ENCODE measurements at regions of chr21 and their contacts with region 1.

Region 1: GRCh38 chr21:37675202-37675801 is 241.0 kb downstream of the KCNJ6 start:
- DNase-seq: peak; percentile 46
- H3K4me3 Mint-ChIP-seq: no peak overlapping the region
- H3K27ac Mint-ChIP-seq: no peak overlapping the region
- H3K4me1 Mint-ChIP-seq: peaks cover 15% of the 10 kb centered on the region
- H3K27me3 Mint-ChIP-seq: peaks cover 11% of the 10 kb centered on the region
- CTCF ChIP-seq: peak; percentile 89

Region 2: DNA sequence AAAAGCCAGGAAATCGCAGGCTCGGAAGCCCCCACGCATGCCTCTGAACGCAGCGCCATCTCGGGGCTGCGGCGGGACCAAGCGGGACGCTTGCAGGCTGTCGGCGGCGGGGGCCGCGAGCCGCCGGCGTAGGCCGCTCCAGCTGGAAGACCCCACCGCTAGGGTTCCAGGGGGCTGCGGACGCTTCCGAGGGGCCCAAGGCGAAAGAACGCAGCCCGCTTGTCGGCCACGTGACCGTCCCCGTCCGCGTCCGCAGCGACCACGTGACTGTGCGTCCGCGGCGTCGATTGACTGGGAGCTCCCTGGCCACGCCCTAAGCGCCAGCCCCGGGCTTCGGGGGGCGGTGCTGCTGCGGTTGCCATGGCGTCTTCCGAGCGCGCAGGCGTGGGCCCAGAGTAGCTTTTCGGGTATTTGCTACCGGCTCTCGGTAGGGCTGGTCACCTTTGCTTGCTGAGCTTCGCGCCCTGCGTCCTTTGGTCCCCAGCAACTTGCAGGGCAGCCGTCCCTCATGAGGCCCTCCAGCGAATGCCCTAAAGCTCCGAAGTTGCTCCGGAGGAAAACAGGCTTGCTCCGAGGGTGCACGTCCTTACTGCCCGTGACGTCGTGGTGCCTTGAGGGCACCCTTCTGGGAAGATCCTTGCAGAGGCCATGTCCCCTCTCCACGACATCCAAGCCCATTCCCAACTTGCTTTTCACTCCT is 111.5 kb before region 1 on chr21:
- CTCF ChIA-PET with region 1: interaction called, 11 read pairs
- POLR2A ChIA-PET with region 1: no interaction called
- intact Hi-C with region 1: no loop called
- DNase-seq: peak; percentile 94
- H3K4me3 Mint-ChIP-seq: peak overlapping the region; percentile 92
- H3K27ac Mint-ChIP-seq: peak overlapping the region; percentile 96
- H3K4me1 Mint-ChIP-seq: peaks cover 15% of the 10 kb centered on the region
- H3K27me3 Mint-ChIP-seq: peaks cover 2% of the 10 kb centered on the region
- CTCF ChIP-seq: peak; percentile 42

Region 3: GRCh38 chr21:37658817-37659458 is 16.4 kb before region 1 on chr21:
- CTCF ChIA-PET with region 1: interaction called, 24 read pairs
- POLR2A ChIA-PET with region 1: interaction called, 4 read pairs
- intact Hi-C with region 1: no loop called
- DNase-seq: peak; percentile 83
- H3K4me3 Mint-ChIP-seq: peak overlapping the region; percentile 6
- H3K27ac Mint-ChIP-seq: peak overlapping the region; percentile 75
- H3K4me1 Mint-ChIP-seq: peaks cover 29% of the 10 kb centered on the region
- H3K27me3 Mint-ChIP-seq: no peaks in the 10 kb centered on the region
- CTCF ChIP-seq: peak; percentile 26

Region 4: GRCh38 chr21:37686991-37687810 is 11.9 kb after region 1 on chr21:
- CTCF ChIA-PET with region 1: interaction called, 10 read pairs
- POLR2A ChIA-PET with region 1: no interaction called
- intact Hi-C with region 1: no loop called
- DNase-seq: no peak
- H3K4me3 Mint-ChIP-seq: no peak overlapping the region
- H3K27ac Mint-ChIP-seq: no peak overlapping the region
- H3K4me1 Mint-ChIP-seq: no peaks in the 10 kb centered on the region
- H3K27me3 Mint-ChIP-seq: no peaks in the 10 kb centered on the region
- CTCF ChIP-seq: no peak

Region 5: DNA sequence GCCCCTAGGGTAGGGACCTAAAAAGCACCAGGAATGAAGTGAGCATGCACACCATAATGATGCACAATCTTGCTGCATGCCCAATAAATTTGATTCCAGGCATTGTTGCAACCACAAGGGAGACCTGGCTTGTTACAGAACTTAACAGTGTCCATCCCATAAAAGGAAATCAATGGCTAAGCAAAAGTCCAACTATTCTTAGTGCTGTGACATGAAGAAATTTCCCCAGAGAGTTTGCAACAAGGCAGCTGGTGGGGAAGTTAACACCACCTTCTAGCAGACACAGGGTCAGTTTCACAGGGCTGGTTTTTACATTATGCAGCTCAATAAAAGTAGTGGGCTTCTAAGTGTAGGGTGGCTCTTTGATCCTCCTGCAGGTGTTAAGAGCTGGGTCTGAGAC is 19.8 kb after region 1 on chr21:
- CTCF ChIA-PET with region 1: interaction called, 10 read pairs
- POLR2A ChIA-PET with region 1: no interaction called
- intact Hi-C with region 1: no loop called
- DNase-seq: no peak
- H3K4me3 Mint-ChIP-seq: no peak overlapping the region
- H3K27ac Mint-ChIP-seq: no peak overlapping the region
- H3K4me1 Mint-ChIP-seq: no peaks in the 10 kb centered on the region
- H3K27me3 Mint-ChIP-seq: peaks cover 25% of the 10 kb centered on the region
- CTCF ChIP-seq: no peak

Region 6: DNA sequence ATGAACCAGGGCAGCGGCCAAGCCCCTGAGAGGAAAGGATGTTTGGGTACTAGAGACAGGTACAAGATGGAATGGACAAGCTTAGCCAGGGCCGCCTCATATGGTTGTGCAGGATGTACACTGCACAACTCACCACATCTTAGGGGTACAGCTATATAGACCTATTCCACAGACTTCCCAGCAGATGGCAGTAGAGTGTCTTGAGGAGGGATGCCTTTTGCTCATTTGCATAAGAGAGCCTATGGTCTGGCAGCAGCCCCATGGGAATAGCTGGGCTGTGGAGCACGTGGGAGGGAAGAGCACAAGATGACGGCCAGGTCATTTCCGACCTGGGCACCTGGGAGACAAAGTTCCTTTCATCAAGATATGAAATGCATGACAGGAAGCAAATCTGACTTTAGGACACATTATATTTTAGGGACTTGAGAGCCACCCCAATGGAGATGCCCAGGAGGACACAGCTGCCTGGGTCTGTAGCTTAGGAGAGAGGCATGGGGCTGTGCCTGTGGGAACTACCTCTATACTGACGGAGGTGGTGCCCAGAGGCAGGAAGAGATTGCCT is 25.4 kb after region 1 on chr21:
- CTCF ChIA-PET with region 1: interaction called, 10 read pairs
- POLR2A ChIA-PET with region 1: no interaction called
- intact Hi-C with region 1: no loop called
- DNase-seq: peak; percentile 88
- H3K4me3 Mint-ChIP-seq: no peak overlapping the region
- H3K27ac Mint-ChIP-seq: no peak overlapping the region
- H3K4me1 Mint-ChIP-seq: no peaks in the 10 kb centered on the region
- H3K27me3 Mint-ChIP-seq: peaks cover 24% of the 10 kb centered on the region
- CTCF ChIP-seq: peak; percentile 57

Region 7: DNA sequence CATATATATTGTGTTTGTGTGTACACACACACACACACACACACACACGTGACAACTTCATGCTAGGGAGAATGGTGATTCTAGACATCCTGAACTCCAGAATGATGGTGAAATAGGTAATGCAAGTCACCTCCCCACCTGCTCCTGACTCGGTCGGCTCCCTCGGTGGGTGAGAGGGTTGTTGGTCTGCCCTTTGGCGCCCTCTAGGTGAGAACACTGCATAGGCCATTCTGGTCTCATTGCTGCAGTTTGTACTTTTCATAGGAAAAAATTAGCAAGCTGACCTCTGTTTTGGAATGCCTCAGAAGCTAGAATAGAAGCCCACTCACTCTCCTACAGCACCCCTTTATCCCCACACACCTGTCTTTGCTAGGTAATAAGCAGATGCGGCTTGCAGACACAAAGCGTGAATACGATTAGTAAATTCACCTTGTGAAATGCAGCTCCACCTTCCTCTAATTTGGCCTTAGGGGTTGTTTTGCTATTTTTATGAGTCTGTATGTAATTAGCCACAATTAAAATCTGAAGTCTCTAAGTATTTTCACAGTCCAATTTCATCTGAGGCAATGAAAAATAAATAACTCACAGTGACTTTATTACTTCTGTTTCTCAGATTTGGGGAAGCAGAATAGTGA is 451.5 kb after region 1 on chr21:
- CTCF ChIA-PET with region 1: interaction called, 20 read pairs
- POLR2A ChIA-PET with region 1: no interaction called
- intact Hi-C with region 1: no loop called
- DNase-seq: peak; percentile 78
- H3K4me3 Mint-ChIP-seq: no peak overlapping the region
- H3K27ac Mint-ChIP-seq: no peak overlapping the region
- H3K4me1 Mint-ChIP-seq: peaks cover 3% of the 10 kb centered on the region
- H3K27me3 Mint-ChIP-seq: no peaks in the 10 kb centered on the region
- CTCF ChIP-seq: peak; percentile 68